GM23248 (cell line): ENCODE measurements at regions of chr5 and their contacts with region 1.

Region 1: GRCh38 chr5:59174248-59174844 is 591.5 kb downstream of the RAB3C start:
- DNase-seq: peak; percentile 81
- H3K4me3 ChIP-seq: no peak overlapping the region
- H3K27ac ChIP-seq: no peak overlapping the region
- H3K4me1 ChIP-seq: no peaks in the 10 kb centered on the region
- H3K27me3 ChIP-seq: no peaks in the 10 kb centered on the region

Region 2: GRCh38 chr5:58891096-58891970 is 283.0 kb before region 1 on chr5:
- in situ Hi-C with region 1: loop called (anchors 10 kb)
- DNase-seq: peak; percentile 87
- H3K4me3 ChIP-seq: peak overlapping the region; percentile 72
- H3K27ac ChIP-seq: peak overlapping the region; percentile 84
- H3K4me1 ChIP-seq: peaks cover 14% of the 10 kb centered on the region
- H3K27me3 ChIP-seq: no peaks in the 10 kb centered on the region

Region 3: GRCh38 chr5:59039296-59040023 is 134.9 kb before region 1 on chr5:
- in situ Hi-C with region 1: loop called (anchors 10 kb)
- DNase-seq: peak; percentile 90
- H3K4me3 ChIP-seq: peak overlapping the region; percentile 88
- H3K27ac ChIP-seq: peak overlapping the region; percentile 19
- H3K4me1 ChIP-seq: peaks cover 57% of the 10 kb centered on the region
- H3K27me3 ChIP-seq: no peaks in the 10 kb centered on the region